CD8-positive, alpha-beta T cell (primary cell): ENCODE measurements at regions of chr14 and their contacts with region 1.

Region 1: DNA sequence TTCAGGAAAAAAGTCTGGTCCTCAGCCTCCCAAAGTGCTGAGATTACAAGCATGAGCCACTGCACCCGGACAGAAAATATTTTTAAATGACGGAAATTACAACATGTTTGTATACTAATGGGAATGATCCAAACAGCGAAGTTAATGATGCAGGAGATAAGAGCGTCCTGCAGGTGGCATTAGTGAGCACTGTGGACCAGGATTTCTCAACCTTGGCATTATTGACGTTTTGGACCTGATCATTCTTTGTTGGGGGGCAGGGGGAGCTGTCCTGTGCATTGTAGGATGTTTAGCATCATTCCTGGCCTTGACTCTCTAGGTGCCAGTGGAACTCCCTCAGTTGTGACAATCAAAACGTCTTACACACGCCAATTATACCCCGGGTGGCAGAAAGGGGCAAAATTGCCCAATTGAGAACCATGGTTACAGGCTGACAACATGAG is 34.1 kb downstream of the SCFD1 start:
- DNase-seq: peak in 7 of 9 experiments; percentile 1 to 65 (median 24)
- ATAC-seq: peak; percentile 83
- H3K4me3 ChIP-seq: no peak overlapping the region
- H3K4me3 Mint-ChIP-seq: no peak overlapping the region
- H3K27ac ChIP-seq: no peak overlapping the region
- H3K27ac Mint-ChIP-seq: no peak overlapping the region
- H3K4me1 ChIP-seq: no peaks in the 10 kb centered on the region
- H3K4me1 Mint-ChIP-seq: no peaks in the 10 kb centered on the region
- H3K27me3 ChIP-seq: no peaks in the 10 kb centered on the region
- H3K27me3 Mint-ChIP-seq: no peaks in the 10 kb centered on the region
- CTCF ChIP-seq: peak; percentile 70

Region 2: DNA sequence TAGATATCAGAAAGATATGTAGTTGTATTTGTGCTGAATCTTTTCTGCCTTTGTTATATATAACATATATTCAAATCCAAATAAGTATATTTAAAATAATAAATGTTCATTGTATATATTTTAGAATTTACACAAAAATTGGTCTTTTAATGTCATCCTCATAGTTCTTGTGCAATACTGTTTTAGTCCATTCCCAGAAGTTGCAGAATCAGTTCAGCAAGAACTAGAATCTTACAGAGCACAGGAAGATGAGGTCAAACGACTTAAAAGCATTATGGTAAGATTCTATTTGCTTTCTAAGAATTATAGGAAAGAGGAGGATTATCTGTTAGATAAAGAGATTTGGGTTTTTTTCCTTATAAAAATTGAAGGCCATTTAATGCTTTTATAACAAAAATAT is 16.9 kb after region 1 on chr14:
- CTCF ChIA-PET with region 1: interaction called, 10 read pairs
- POLR2A ChIA-PET with region 1: no interaction called
- intact Hi-C with region 1: no loop called
- DNase-seq: no peak
- ATAC-seq: no peak
- H3K4me3 ChIP-seq: no peak overlapping the region
- H3K4me3 Mint-ChIP-seq: no peak overlapping the region
- H3K27ac ChIP-seq: no peak overlapping the region
- H3K27ac Mint-ChIP-seq: no peak overlapping the region
- H3K4me1 ChIP-seq: no peaks in the 10 kb centered on the region
- H3K4me1 Mint-ChIP-seq: peaks cover 7% of the 10 kb centered on the region
- H3K27me3 ChIP-seq: no peaks in the 10 kb centered on the region
- H3K27me3 Mint-ChIP-seq: no peaks in the 10 kb centered on the region
- CTCF ChIP-seq: no peak

Region 3: DNA sequence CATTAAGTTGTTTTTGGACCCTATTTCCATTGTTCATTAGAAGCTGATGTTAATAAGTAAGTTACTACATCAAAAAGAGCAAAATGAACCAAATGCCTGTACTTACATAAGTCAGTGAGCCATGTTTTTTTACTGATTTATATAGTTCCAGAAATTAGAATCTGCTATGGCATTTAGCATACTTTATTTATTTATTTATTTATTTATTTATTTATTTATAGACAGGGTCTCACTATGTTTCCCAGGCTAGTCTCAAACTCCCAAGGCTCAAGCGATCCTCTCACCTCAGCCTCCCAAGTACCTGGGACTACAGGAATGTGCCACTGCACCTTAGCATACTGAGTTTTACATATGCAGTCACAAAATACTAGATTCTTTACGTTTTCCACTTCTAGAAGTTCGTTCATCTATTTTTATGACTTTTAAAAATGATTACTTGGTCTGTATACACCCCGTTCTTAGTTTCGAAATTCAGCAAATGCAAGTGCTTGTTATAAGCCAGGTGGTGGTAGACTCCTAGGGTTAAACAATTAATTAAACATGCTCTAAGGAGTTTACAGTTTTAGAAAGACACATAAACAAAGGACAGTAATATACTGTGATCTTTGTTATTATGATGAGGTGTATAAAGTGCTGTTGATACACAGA is 35.7 kb after region 1 on chr14:
- CTCF ChIA-PET with region 1: no interaction called
- POLR2A ChIA-PET with region 1: no interaction called
- intact Hi-C with region 1: loop called (anchors 5 kb)
- DNase-seq: no peak
- ATAC-seq: no peak
- H3K4me3 ChIP-seq: no peak overlapping the region
- H3K4me3 Mint-ChIP-seq: no peak overlapping the region
- H3K27ac ChIP-seq: peak overlapping the region in 1 of 2 experiments; percentile 79
- H3K27ac Mint-ChIP-seq: peak overlapping the region; percentile 88
- H3K4me1 ChIP-seq: peaks cover 8% of the 10 kb centered on the region
- H3K4me1 Mint-ChIP-seq: peaks cover 11% of the 10 kb centered on the region
- H3K27me3 ChIP-seq: no peaks in the 10 kb centered on the region
- H3K27me3 Mint-ChIP-seq: no peaks in the 10 kb centered on the region
- CTCF ChIP-seq: no peak

Region 4: DNA sequence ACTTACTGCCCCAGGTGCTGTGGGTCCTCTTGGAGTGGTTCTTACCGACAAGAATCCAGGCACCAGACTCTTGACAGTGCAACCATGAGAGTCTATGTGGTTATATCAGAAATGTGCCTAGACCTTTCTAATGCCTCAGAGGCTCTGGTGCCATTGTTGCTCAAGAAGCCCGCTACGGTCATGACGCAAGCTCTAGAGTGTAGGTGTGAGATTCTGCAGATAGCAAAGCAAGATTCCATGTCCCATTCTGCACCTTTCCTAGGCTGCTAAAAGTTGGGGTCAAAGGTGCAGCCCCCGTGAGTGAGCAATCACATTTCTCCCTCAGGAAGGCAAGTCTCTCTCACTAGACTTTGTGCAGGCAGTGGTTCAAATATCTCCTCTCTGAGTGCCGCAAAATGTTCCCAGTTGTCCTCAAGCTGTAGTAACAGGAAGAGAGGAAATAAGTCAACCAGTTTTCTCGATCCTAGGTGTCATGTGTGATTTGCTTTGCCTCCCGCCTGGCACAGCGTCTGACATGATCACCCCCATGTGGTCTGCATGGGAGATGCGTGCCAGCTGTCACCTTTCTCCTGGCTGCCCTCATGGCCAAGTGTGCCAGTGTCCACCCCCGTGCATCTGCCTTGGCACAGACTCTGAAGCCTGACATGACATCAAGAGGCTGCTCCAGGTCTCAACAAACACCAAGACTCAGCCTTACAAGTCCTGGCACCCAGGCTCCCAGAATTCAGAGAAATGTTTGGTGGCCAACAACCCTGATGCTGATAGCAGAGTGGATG is 95.6 kb after region 1 on chr14:
- CTCF ChIA-PET with region 1: interaction called, 5 read pairs
- POLR2A ChIA-PET with region 1: no interaction called
- intact Hi-C with region 1: loop called (anchors 2 kb)
- DNase-seq: peak in 2 of 9 experiments; percentile 3 to 15
- ATAC-seq: no peak
- H3K4me3 ChIP-seq: no peak overlapping the region
- H3K4me3 Mint-ChIP-seq: no peak overlapping the region
- H3K27ac ChIP-seq: no peak overlapping the region
- H3K27ac Mint-ChIP-seq: no peak overlapping the region
- H3K4me1 ChIP-seq: no peaks in the 10 kb centered on the region
- H3K4me1 Mint-ChIP-seq: no peaks in the 10 kb centered on the region
- H3K27me3 ChIP-seq: no peaks in the 10 kb centered on the region
- H3K27me3 Mint-ChIP-seq: peaks cover 4% of the 10 kb centered on the region
- CTCF ChIP-seq: no peak

Region 5: GRCh38 chr14:30906752-30907658 is 250.8 kb after region 1 on chr14:
- CTCF ChIA-PET with region 1: interaction called, 4 read pairs
- POLR2A ChIA-PET with region 1: no interaction called
- intact Hi-C with region 1: loop called (anchors 1 to 2 kb)
- DNase-seq: peak in 2 of 9 experiments; percentile 10 to 31
- ATAC-seq: no peak
- H3K4me3 ChIP-seq: no peak overlapping the region
- H3K4me3 Mint-ChIP-seq: no peak overlapping the region
- H3K27ac ChIP-seq: no peak overlapping the region
- H3K27ac Mint-ChIP-seq: no peak overlapping the region
- H3K4me1 ChIP-seq: no peaks in the 10 kb centered on the region
- H3K4me1 Mint-ChIP-seq: no peaks in the 10 kb centered on the region
- H3K27me3 ChIP-seq: no peaks in the 10 kb centered on the region
- H3K27me3 Mint-ChIP-seq: no peaks in the 10 kb centered on the region
- CTCF ChIP-seq: no peak